ENCODE measurements at regions of chrX and their contacts with region 1.

Region 1: DNA sequence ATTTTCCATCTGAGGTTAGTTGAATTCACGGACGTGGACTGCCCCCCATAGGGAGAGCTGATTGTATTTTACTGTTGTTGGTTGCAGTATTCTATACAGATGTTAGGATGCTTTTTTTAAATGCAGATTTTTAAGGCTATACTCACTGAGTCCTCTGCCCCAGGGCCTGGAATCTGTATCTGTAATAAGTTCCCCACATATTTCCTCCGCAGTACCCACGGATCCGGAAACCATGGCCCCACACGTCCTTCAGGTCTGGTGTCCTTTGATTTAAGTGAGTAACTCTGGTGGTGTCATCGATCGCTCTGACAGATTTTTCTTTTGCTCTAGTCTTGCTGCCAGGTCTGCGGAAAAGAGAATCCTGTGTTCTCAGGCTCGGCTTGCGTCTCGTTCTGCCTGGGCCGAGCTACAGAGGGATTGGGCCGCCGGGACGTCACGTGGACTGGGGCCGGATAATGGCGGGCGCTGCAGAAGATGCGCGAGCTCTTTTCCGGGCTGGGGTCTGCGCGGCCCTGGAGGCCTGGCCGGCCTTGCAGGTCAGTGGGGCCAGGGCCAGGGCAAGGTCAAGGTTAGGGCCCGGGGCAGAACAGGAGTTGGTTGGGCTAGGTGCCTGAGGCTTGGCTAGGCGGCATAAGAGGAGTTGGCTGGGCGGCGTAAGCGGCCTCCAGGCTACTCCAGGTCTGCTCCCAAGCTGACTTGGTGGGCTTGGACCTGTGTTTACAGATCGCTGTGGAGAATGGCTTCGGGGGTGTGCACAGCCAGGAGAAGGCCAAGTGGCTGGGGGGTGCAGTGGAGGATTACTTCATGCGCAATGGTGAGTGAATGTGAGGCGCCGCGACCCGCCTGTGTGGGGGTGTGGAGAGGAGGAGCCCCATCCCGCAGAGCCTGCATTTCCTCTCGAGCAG is at the start of gene TSR2:
- DNase-seq: peak; percentile 84
- ATAC-seq: peak; percentile 97
- H3K4me3 ChIP-seq: peak within 1 kb of the TSS; percentile 77 to 90 (median 87)
- H3K27ac ChIP-seq: peak within 1 kb of the TSS; percentile 54
- H3K4me1 ChIP-seq: peaks cover 15% of the 10 kb centered on the region
- H3K27me3 ChIP-seq: no peaks in the 10 kb centered on the region; a peak in 1 of 5 replicates
- CTCF ChIP-seq: peak; percentile 47
- EP300 ChIP-seq: no peak
- POLR2A ChIP-seq: peak; percentile 47 to 65; a peak in 3 of 4 replicates
- RAD21 ChIP-seq: no peak
- total RNA-seq, gene TSR2: 31.6 and 35.5 TPM in 2 replicates

Region 2: DNA sequence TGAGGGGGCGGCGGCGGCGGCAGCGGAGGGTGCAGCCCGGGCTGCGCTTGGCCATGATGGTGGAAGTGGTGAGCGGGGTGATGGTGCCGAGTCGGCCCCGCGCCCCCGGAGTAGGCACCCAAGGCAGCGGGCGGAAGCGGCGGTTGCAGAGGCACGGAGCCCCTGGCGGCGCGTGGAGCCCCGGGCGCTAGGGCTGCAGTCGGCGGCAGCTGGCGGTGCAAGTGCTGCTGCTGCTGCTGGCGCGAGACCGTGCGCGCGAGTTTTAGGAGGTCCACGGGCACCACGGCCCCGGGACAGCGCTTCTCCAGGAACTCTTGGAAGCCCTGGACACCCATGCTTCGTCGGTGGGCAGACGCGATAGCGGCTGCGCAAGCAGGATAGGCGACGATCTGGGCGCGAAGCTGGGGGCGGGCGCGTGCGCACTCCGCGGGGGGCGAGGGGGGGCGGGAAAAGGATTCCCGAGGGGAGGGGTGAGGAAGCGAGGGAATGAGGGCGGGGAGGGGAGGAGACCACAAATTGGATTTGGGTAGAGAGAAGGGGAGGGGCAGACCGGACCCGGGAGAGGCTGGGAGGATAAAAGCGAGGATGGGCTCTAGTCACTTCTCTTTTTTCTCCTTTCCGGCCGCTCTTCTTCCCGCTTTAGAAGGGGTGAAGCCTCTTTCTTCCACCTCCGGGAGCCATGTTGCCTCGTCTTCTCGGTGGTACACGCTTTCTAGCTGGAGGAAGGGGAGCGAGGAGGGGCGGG is 257.2 kb before region 1 on chrX and contains the start of gene FAM120C:
- CTCF ChIA-PET with region 1: no interaction called
- POLR2A ChIA-PET with region 1: no interaction called
- in situ Hi-C with region 1: no loop called
- intact Hi-C with region 1: loop called (anchors 1 kb)
- DNase-seq: peak; percentile 51
- ATAC-seq: peak; percentile 88
- H3K4me3 ChIP-seq: peak within 1 kb of the TSS; percentile 64 to 77 (median 75)
- H3K27ac ChIP-seq: peak within 1 kb of the TSS; percentile 71
- H3K4me1 ChIP-seq: peaks cover 40% of the 10 kb centered on the region
- H3K27me3 ChIP-seq: no peaks in the 10 kb centered on the region
- CTCF ChIP-seq: no peak
- EP300 ChIP-seq: no peak
- POLR2A ChIP-seq: peak; percentile 50 to 73
- RAD21 ChIP-seq: no peak
- total RNA-seq, gene FAM120C: 7.4 and 7.5 TPM in 2 replicates

Region 3: GRCh38 chrX:54248309-54248708 is 191.9 kb before region 1 on chrX:
- CTCF ChIA-PET with region 1: no interaction called
- POLR2A ChIA-PET with region 1: no interaction called
- in situ Hi-C with region 1: no loop called
- intact Hi-C with region 1: loop called (anchors 1 kb)
- DNase-seq: peak; percentile 12
- ATAC-seq: peak; percentile 59; the same call in 2 of the 3 replicates
- H3K4me3 ChIP-seq: no peak overlapping the region
- H3K27ac ChIP-seq: no peak overlapping the region
- H3K4me1 ChIP-seq: no peaks in the 10 kb centered on the region
- H3K27me3 ChIP-seq: no peaks in the 10 kb centered on the region
- CTCF ChIP-seq: peak; percentile 60
- EP300 ChIP-seq: no peak
- POLR2A ChIP-seq: no peak
- RAD21 ChIP-seq: 0 out of 2 replicates have a peak, but pooled peaks have one; percentile 38

Region 4: DNA sequence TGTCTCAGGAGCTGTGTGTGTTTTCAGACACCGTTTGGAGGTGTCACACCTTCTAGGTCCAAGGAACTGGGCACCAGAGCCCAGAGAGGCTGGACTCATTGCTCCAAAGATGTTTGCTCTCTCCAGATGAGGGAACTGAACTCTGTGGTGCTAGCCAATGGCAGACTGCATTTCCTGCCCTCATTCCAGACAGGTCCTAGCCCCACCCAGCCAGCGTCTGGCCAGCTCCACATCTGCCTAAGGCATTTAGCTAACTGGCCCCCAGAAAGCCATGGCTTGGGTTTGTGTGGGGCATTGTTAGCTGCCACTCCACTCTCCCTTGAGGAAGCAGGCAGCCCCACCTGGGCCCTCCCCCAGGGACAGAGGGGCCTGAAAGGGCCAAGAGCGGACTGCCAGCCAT is 44.4 kb after region 1 on chrX:
- CTCF ChIA-PET with region 1: no interaction called
- POLR2A ChIA-PET with region 1: no interaction called
- in situ Hi-C with region 1: no loop called
- intact Hi-C with region 1: loop called (anchors 2 kb)
- DNase-seq: no peak
- ATAC-seq: peak; percentile 63
- H3K4me3 ChIP-seq: peak overlapping the region in 1 of 3 experiments; percentile 4; a peak in 1 of 6 replicates
- H3K27ac ChIP-seq: no peak overlapping the region
- H3K4me1 ChIP-seq: peaks cover 30% of the 10 kb centered on the region
- H3K27me3 ChIP-seq: no peaks in the 10 kb centered on the region
- CTCF ChIP-seq: no peak
- EP300 ChIP-seq: no peak
- POLR2A ChIP-seq: no peak
- RAD21 ChIP-seq: no peak